ENCODE measurements at regions of chr15 and their contacts with region 1.

Region 1: GRCh38 chr15:73897441-73898261 is 24.3 kb downstream of the TBC1D21 start:
- DNase-seq: peak; percentile 39 to 85 (median 74)
- ATAC-seq: peak; percentile 88 to 94 (median 90)
- H3K4me3 ChIP-seq: no peak overlapping the region
- H3K27ac ChIP-seq: no peak overlapping the region
- H3K4me1 ChIP-seq: peaks cover 0 to 2% (median 0%) of the 10 kb centered on the region in 12 donors
- H3K27me3 ChIP-seq: no peaks in the 10 kb centered on the region
- CTCF ChIP-seq: peak; percentile 76 to 86 (median 80)
- POLR2A ChIP-seq: no peak

Region 2: DNA sequence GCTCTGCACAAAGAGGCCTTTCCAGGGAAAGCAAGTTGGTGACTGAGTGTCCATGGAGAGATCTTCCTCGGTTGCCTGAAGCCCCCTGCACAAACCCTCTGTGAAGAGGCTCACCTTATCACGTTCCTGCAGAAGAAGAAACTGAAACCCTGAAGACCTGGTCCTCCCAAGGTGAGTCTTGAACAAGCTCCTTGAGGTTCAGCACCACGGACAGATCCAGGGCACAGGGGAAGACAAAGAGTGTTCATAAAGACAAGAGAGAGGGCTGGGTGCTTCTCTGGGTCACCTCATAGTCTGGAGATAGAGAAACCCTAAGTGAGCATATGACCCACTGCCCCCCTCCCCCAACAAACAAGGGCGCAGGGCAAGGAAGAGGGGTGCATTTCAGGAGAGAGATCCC is 46.0 kb before region 1 on chr15:
- intact Hi-C with region 1: no loop called
- DNase-seq: peak in 2 of 5 donors; percentile 45 to 48
- ATAC-seq: no peak
- H3K4me3 ChIP-seq: no peak overlapping the region
- H3K27ac ChIP-seq: no peak overlapping the region
- H3K4me1 ChIP-seq: peaks cover 0 to 10% (median 0%) of the 10 kb centered on the region in 12 donors
- H3K27me3 ChIP-seq: no peaks in the 10 kb centered on the region
- CTCF ChIP-seq: no peak
- POLR2A ChIP-seq: no peak

Region 3: DNA sequence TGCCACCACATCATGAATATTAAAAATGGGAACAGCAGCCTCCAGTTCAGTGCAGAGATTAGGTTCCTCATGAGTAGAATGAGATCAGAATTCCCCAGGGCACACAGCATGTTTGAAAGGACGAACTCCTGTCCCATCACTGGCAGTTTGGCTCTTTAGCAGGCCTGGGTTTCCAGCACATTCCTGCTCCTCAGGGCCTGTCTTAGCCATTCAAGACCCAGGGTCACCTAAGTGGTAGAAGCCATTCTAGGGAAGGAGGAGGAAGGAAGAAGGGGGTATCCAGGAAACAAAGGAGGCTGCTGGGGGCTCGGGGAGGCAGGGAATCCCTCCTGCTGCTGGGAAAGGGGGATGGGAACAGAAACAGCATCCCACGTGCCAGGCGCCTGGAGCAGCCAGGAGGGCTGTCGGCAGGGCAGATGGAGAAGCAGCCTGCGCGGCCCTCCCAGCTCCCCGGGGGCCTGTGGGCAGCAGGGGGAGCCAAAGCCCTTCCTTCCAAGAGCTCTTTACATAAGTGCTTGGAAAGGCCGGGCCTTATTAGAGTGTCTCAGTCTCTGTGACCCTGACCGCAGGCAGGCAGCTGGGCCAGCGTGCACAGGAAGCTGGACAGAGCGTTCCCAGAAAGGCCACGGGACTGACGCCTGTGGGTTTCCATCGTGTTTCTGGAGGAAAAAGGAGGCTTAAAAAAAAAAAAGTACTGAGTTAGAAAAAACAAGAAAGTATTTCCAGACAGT is 53.3 kb after region 1 on chr15:
- intact Hi-C with region 1: loop called in 2 of 10 experiments (anchors 5 to 10 kb)
- DNase-seq: peak; percentile 93 to 97 (median 95)
- ATAC-seq: peak; percentile 91 to 97 (median 93)
- H3K4me3 ChIP-seq: no peak overlapping the region
- H3K27ac ChIP-seq: peak overlapping the region; percentile 84 to 98 (median 93)
- H3K4me1 ChIP-seq: peaks cover 9 to 42% (median 31%) of the 10 kb centered on the region in 12 donors
- H3K27me3 ChIP-seq: no peaks in the 10 kb centered on the region
- CTCF ChIP-seq: peak; percentile 76 to 94 (median 88)
- POLR2A ChIP-seq: no peak

Measured in heart left ventricle (tissue), 16 donors.